Activated CD4-positive, alpha-beta T cell treated with anti-CD3 and anti-CD28 coated beads for 36 hours (primary cell): ENCODE measurements at regions of chr10 and their contacts with region 1.

Region 1: GRCh38 chr10:109883859-109884771 is 39.2 kb downstream of the XPNPEP1 start:
- DNase-seq: peak; percentile 73
- ATAC-seq: peak; percentile 71
- H3K4me3 Mint-ChIP-seq: no peak overlapping the region
- H3K27ac Mint-ChIP-seq: no peak overlapping the region
- H3K4me1 Mint-ChIP-seq: peaks cover 10% of the 10 kb centered on the region
- H3K27me3 Mint-ChIP-seq: no peaks in the 10 kb centered on the region

Region 2: GRCh38 chr10:109898007-109898406 is 13.9 kb after region 1 on chr10:
- CTCF ChIA-PET with region 1: interaction called, 13 read pairs
- POLR2A ChIA-PET with region 1: no interaction called
- intact Hi-C with region 1: no loop called
- DNase-seq: no peak
- ATAC-seq: no peak
- H3K4me3 Mint-ChIP-seq: no peak overlapping the region
- H3K27ac Mint-ChIP-seq: no peak overlapping the region
- H3K4me1 Mint-ChIP-seq: peaks cover 52% of the 10 kb centered on the region
- H3K27me3 Mint-ChIP-seq: no peaks in the 10 kb centered on the region

Region 3: GRCh38 chr10:109914966-109915365 is 30.9 kb after region 1 on chr10:
- CTCF ChIA-PET with region 1: interaction called, 13 read pairs
- POLR2A ChIA-PET with region 1: no interaction called
- intact Hi-C with region 1: loop called in 1 of 2 experiments (anchors 5 kb)
- DNase-seq: peak; percentile 53
- ATAC-seq: peak; percentile 91
- H3K4me3 Mint-ChIP-seq: no peak overlapping the region
- H3K27ac Mint-ChIP-seq: peak overlapping the region; percentile 81
- H3K4me1 Mint-ChIP-seq: peaks cover 89% of the 10 kb centered on the region
- H3K27me3 Mint-ChIP-seq: no peaks in the 10 kb centered on the region

Region 4: DNA sequence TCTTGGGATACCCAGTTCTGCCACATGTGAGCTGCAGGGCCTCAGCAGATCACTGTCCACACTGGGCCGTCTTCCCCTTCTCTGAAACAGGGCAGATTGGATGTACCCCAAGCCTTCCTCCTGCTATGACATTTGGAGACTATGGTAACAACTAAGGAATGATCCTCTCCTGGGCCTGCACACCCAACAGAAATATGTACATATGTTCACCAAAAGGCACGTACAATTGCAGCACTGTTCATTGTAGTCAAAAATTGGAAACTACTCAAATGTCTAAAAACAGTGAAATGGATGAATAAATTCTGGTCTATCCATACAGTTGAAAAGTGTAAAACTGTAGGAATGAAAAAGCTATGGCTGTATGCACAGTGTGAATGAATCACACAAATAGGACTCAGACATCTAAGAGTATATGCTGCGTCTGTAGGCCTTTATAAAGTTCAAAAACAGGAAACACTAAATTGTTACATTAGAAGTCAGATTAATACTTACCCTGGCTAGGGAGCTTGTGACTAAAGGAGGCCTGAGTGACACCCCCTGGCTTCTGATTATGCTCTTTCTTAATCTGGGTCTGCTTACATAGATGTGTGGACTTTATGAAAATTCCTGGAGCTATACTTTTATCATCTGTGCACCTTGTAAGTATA is 55.3 kb after region 1 on chr10:
- CTCF ChIA-PET with region 1: interaction called, 10 read pairs
- POLR2A ChIA-PET with region 1: no interaction called
- intact Hi-C with region 1: no loop called
- DNase-seq: no peak
- ATAC-seq: peak; percentile 16
- H3K4me3 Mint-ChIP-seq: no peak overlapping the region
- H3K27ac Mint-ChIP-seq: peak overlapping the region; percentile 20
- H3K4me1 Mint-ChIP-seq: peaks cover 48% of the 10 kb centered on the region
- H3K27me3 Mint-ChIP-seq: no peaks in the 10 kb centered on the region

Region 5: GRCh38 chr10:109978481-109978880 is 94.4 kb after region 1 on chr10:
- CTCF ChIA-PET with region 1: interaction called, 10 read pairs
- POLR2A ChIA-PET with region 1: no interaction called
- intact Hi-C with region 1: loop called in 1 of 2 experiments (anchors 5 kb)
- DNase-seq: peak; percentile 79
- ATAC-seq: peak; percentile 75
- H3K4me3 Mint-ChIP-seq: no peak overlapping the region
- H3K27ac Mint-ChIP-seq: peak overlapping the region; percentile 6
- H3K4me1 Mint-ChIP-seq: peaks cover 9% of the 10 kb centered on the region
- H3K27me3 Mint-ChIP-seq: no peaks in the 10 kb centered on the region